Activated CD8-positive, alpha-beta memory T cell treated with anti-CD3 and anti-CD28 coated beads, Interleukin-2, amount 10 ng/mL, durations not matched to agents 7 days and 5 days (primary cell): ENCODE measurements at regions of chr12 and their contacts with region 1.

Region 1: GRCh38 chr12:112900299-112901145 is 6.2 kb upstream of the OAS1 start:
- DNase-seq: peak; percentile 70
- ATAC-seq: peak; percentile 66
- H3K4me3 Mint-ChIP-seq: no peak overlapping the region
- H3K27ac Mint-ChIP-seq: no peak overlapping the region
- H3K4me1 Mint-ChIP-seq: peaks cover 37% of the 10 kb centered on the region
- H3K27me3 Mint-ChIP-seq: peaks cover 23% of the 10 kb centered on the region

Region 2: DNA sequence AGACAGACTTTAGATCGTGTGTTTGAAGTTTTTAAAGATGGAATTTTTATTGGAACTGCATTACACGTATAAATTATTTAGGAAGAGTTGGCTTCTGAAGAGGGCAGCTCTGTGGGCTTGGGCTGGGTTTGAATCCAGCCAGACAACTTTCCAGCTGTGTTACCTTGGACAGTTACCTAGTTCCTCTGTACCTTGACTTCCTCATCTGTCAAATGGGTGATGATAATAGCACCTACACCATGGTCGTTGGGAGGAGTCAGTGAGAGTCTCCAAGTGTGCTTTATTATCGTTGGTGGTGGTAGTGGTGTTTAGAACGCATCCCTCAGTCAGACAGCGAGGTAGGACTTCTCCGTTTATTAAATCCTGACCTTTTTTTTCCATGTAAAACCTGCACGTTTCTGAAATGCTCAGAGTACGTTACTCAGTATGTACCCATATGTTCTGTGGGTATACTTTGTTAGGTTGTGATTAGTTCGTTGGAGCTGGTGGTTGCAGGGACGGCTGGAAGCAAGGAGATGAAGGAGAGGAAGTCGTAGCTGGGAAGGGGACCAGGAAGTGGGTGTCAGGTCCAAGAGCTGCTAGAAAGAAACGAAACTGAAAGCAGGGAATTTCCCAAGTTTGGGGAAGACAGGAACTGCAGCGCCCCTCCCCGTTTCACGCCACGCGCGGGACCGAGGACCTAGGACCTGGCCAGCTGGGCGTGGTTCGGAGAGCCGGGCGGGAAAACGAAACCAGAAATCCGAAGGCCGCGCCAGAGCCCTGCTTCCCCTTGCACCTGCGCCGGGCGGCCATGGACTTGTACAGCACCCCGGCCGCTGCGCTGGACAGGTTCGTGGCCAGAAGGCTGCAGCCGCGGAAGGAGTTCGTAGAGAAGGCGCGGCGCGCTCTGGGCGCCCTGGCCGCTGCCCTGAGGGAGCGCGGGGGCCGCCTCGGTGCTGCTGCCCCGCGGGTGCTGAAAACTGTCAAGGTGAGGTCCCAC is 37.5 kb after region 1 on chr12 and contains the start of gene OAS3:
- CTCF ChIA-PET with region 1: interaction called, 14 read pairs
- DNase-seq: peak; percentile 91
- ATAC-seq: peak; percentile 89
- H3K4me3 Mint-ChIP-seq: peak within 1 kb of the TSS; percentile 98
- H3K27ac Mint-ChIP-seq: peak within 1 kb of the TSS; percentile 93
- H3K4me1 Mint-ChIP-seq: peaks cover 55% of the 10 kb centered on the region
- H3K27me3 Mint-ChIP-seq: no peaks in the 10 kb centered on the region
- total RNA-seq, gene OAS3: 290 to 394 TPM

Region 3: GRCh38 chr12:112978163-112979040 is 77.9 kb after region 1 on chr12 and contains the start of gene OAS2:
- CTCF ChIA-PET with region 1: interaction called, 12 read pairs
- DNase-seq: peak; percentile 96
- ATAC-seq: peak; percentile 92
- H3K4me3 Mint-ChIP-seq: peak within 1 kb of the TSS; percentile 89
- H3K27ac Mint-ChIP-seq: peak within 1 kb of the TSS; percentile 100
- H3K4me1 Mint-ChIP-seq: peaks cover 52% of the 10 kb centered on the region
- H3K27me3 Mint-ChIP-seq: no peaks in the 10 kb centered on the region
- total RNA-seq, gene OAS2: 276 to 383 TPM

Region 4: GRCh38 chr12:113103756-113104450 is 203.4 kb after region 1 on chr12:
- CTCF ChIA-PET with region 1: no interaction called
- DNase-seq: peak; percentile 76
- ATAC-seq: peak; percentile 92
- H3K4me3 Mint-ChIP-seq: peak overlapping the region; percentile 57
- H3K27ac Mint-ChIP-seq: peak overlapping the region; percentile 37
- H3K4me1 Mint-ChIP-seq: peaks cover 20% of the 10 kb centered on the region
- H3K27me3 Mint-ChIP-seq: peaks cover 3% of the 10 kb centered on the region